Posterior vena cava (tissue), 2 donors: ENCODE measurements at regions of chr1 and their contacts with region 1.

Region 1: GRCh38 chr1:204677864-204678263 is 7.7 kb downstream of the LRRN2 start:
- DNase-seq: no peak

Region 2: GRCh38 chr1:204721373-204722055 is 43.6 kb after region 1 on chr1:
- intact Hi-C with region 1: loop called in 1 of 2 experiments (anchors 2 kb)
- DNase-seq: no peak

Region 3: GRCh38 chr1:204793259-204793914 is 115.5 kb after region 1 on chr1:
- intact Hi-C with region 1: no loop called
- DNase-seq: no peak